CD4-positive, alpha-beta memory T cell (primary cell): ENCODE measurements at regions of chr2 and their contacts with region 1.

Region 1: DNA sequence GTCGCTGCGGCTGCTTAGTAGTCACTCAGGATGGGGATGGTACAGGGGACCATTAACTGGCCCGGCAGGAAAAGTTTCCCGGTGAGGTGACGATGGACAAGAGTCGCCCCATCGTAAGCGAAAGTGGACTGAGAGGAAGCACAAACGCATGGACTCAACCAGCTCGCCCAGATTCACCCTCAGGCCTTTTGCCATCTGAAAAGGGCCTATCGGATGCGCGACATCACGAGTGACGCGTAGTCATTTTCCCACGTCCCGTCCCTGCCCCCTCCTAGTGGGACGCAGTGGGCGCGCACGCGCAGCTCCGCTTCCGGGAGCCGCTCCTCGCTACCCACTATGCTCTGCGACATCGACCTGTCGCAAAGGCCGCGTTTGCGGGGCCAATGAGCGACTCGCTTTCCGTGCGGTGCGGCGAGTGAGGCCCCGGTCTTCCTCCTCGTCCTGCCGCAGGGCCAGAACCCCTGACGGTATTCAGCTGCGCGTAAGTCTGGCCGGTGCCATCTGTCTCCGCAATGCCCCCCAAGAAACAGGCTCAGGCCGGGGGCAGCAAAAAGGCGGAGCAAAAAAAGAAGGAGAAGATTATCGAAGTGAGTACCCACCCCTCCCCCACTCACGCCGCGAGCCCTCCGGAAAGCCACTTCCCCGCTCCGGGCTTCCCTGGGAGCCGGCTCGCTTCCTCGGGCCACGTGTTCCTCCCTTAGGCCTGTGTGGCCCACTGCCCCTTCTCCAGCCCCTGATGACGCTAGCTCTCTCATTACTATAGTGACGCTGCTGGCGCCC is at the start of gene ZC3H15:
- DNase-seq: peak; percentile 96 to 97 (median 97)
- H3K4me3 ChIP-seq: peak within 1 kb of the TSS; percentile 72 to 93
- H3K4me3 Mint-ChIP-seq: peak within 1 kb of the TSS; percentile 97 to 99 (median 98)
- H3K27ac ChIP-seq: peak within 1 kb of the TSS; percentile 88
- H3K27ac Mint-ChIP-seq: peak within 1 kb of the TSS; percentile 97 to 100 (median 99)
- H3K4me1 ChIP-seq: peaks cover 58% of the 10 kb centered on the region
- H3K4me1 Mint-ChIP-seq: peaks cover 41 to 63% (median 47%) of the 10 kb centered on the region in 4 donors
- H3K27me3 ChIP-seq: no peaks in the 10 kb centered on the region
- H3K27me3 Mint-ChIP-seq: no peaks in the 10 kb centered on the region
- total RNA-seq, gene ZC3H15: 53.5 to 60.2 TPM

Region 2: GRCh38 chr2:186460465-186460864 is 25.6 kb before region 1 on chr2:
- CTCF ChIA-PET with region 1: no interaction called
- POLR2A ChIA-PET with region 1: no interaction called
- intact Hi-C with region 1: no loop called
- DNase-seq: no peak
- H3K4me3 ChIP-seq: no peak overlapping the region
- H3K4me3 Mint-ChIP-seq: no peak overlapping the region
- H3K27ac ChIP-seq: no peak overlapping the region
- H3K27ac Mint-ChIP-seq: no peak overlapping the region
- H3K4me1 ChIP-seq: no peaks in the 10 kb centered on the region
- H3K4me1 Mint-ChIP-seq: no peaks in the 10 kb centered on the region
- H3K27me3 ChIP-seq: no peaks in the 10 kb centered on the region
- H3K27me3 Mint-ChIP-seq: no peaks in the 10 kb centered on the region

Region 3: GRCh38 chr2:186503848-186504606 is 18.0 kb after region 1 on chr2:
- CTCF ChIA-PET with region 1: interaction called, 14 read pairs
- POLR2A ChIA-PET with region 1: interaction called, 11 read pairs
- intact Hi-C with region 1: loop called (anchors 2 kb)
- DNase-seq: peak in 4 of 5 donors; percentile 11 to 36 (median 26)
- H3K4me3 ChIP-seq: no peak overlapping the region
- H3K4me3 Mint-ChIP-seq: no peak overlapping the region
- H3K27ac ChIP-seq: no peak overlapping the region
- H3K27ac Mint-ChIP-seq: peak overlapping the region in 6 of 7 donors; percentile 27 to 82 (median 64)
- H3K4me1 ChIP-seq: peaks cover 3% of the 10 kb centered on the region
- H3K4me1 Mint-ChIP-seq: peaks cover 6 to 23% (median 13%) of the 10 kb centered on the region in 4 donors
- H3K27me3 ChIP-seq: no peaks in the 10 kb centered on the region
- H3K27me3 Mint-ChIP-seq: no peaks in the 10 kb centered on the region

Region 4: GRCh38 chr2:186589612-186590349 is 103.7 kb after region 1 on chr2 and contains the start of gene ITGAV:
- CTCF ChIA-PET with region 1: interaction called, 6 read pairs
- POLR2A ChIA-PET with region 1: interaction called, 44 read pairs
- intact Hi-C with region 1: loop called (anchors 1 kb)
- DNase-seq: peak; percentile 79 to 89 (median 83)
- H3K4me3 ChIP-seq: peak within 1 kb of the TSS; percentile 77 to 85
- H3K4me3 Mint-ChIP-seq: peak within 1 kb of the TSS; percentile 88 to 96 (median 94)
- H3K27ac ChIP-seq: peak within 1 kb of the TSS; percentile 46
- H3K27ac Mint-ChIP-seq: peak within 1 kb of the TSS; percentile 73 to 93 (median 88)
- H3K4me1 ChIP-seq: peaks cover 38% of the 10 kb centered on the region
- H3K4me1 Mint-ChIP-seq: peaks cover 26 to 41% (median 31%) of the 10 kb centered on the region in 4 donors
- H3K27me3 ChIP-seq: no peaks in the 10 kb centered on the region
- H3K27me3 Mint-ChIP-seq: peaks cover 0 to 3% of the 10 kb centered on the region in 2 donors
- total RNA-seq, gene ITGAV: 11.0 to 12.0 TPM

Region 5: GRCh38 chr2:186862869-186863709 is 377.0 kb after region 1 on chr2:
- CTCF ChIA-PET with region 1: no interaction called
- POLR2A ChIA-PET with region 1: no interaction called
- intact Hi-C with region 1: no loop called
- DNase-seq: no peak
- H3K4me3 ChIP-seq: no peak overlapping the region
- H3K4me3 Mint-ChIP-seq: no peak overlapping the region
- H3K27ac ChIP-seq: no peak overlapping the region
- H3K27ac Mint-ChIP-seq: no peak overlapping the region
- H3K4me1 ChIP-seq: no peaks in the 10 kb centered on the region
- H3K4me1 Mint-ChIP-seq: no peaks in the 10 kb centered on the region
- H3K27me3 ChIP-seq: no peaks in the 10 kb centered on the region
- H3K27me3 Mint-ChIP-seq: peaks cover 0 to 2% of the 10 kb centered on the region in 2 donors